ENCODE measurements at regions of chr12 and their contacts with region 1.

Region 1: GRCh38 chr12:127619869-127620734 is 646.9 kb upstream of the TMEM132C start:
- DNase-seq: no peak
- H3K4me3 ChIP-seq: no peak overlapping the region
- H3K27ac ChIP-seq: no peak overlapping the region
- H3K4me1 ChIP-seq: no peaks in the 10 kb centered on the region
- H3K27me3 ChIP-seq: no peaks in the 10 kb centered on the region
- CTCF ChIP-seq: no peak
- EP300 ChIP-seq: no peak
- POLR2A ChIP-seq: no peak

Region 2: GRCh38 chr12:127121494-127122084 is 498.5 kb before region 1 on chr12:
- in situ Hi-C with region 1: no loop called
- intact Hi-C with region 1: loop called (anchors 5 kb)
- DNase-seq: no peak
- H3K4me3 ChIP-seq: no peak overlapping the region
- H3K27ac ChIP-seq: no peak overlapping the region
- H3K4me1 ChIP-seq: no peaks in the 10 kb centered on the region
- H3K27me3 ChIP-seq: no peaks in the 10 kb centered on the region
- CTCF ChIP-seq: no peak
- EP300 ChIP-seq: no peak
- POLR2A ChIP-seq: no peak

Region 3: DNA sequence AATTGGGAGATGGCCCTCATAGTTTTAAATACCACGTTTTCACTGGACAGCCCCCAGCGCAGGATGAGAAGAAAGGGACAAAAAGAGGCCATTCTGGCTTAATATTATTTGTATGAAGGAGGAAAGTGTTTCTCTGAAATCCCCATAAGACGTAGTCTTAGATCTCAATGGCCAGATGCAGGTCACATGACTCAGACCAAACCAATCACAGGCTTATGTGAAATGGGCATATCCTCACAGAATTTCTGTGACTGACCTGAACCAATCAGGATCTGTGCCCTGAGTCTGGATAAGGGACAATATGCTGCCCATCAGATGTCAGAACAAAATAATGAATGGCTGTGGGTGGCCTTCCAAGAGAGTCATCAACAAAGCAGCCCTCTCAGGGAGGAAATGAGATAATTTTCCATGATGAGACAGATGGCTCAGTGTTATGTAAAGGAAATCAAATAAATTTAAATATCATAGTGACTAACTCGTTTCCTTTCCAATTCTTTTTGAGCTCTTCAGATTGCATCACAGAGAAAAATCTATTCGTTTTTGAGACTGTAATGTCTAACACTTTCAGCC is 362.7 kb before region 1 on chr12:
- in situ Hi-C with region 1: no loop called
- intact Hi-C with region 1: no loop called
- DNase-seq: no peak
- H3K4me3 ChIP-seq: no peak overlapping the region
- H3K27ac ChIP-seq: no peak overlapping the region
- H3K4me1 ChIP-seq: no peaks in the 10 kb centered on the region
- H3K27me3 ChIP-seq: no peaks in the 10 kb centered on the region
- CTCF ChIP-seq: no peak
- EP300 ChIP-seq: no peak
- POLR2A ChIP-seq: no peak

Region 4: DNA sequence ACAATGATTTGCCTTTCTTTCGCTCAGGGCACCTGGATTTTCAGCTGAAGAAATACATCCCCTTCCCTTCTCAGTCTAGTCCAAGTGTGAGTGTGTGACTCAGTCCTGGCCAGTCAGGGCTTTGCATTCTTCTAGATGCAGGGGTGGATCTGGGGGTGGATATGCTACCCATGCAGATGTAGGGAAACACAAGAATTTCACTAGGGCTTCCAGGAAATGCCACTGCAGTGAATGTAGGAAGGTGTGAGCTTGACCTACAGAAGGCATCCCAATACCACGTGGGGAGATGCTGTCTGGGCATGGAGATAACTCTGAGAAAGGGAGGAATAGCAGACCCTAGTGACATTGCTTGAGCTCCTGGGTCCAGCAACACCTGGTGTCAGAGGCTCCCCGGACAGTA is 1637.4 kb after region 1 on chr12:
- in situ Hi-C with region 1: no loop called
- intact Hi-C with region 1: no loop called
- DNase-seq: no peak
- H3K4me3 ChIP-seq: no peak overlapping the region
- H3K27ac ChIP-seq: no peak overlapping the region
- H3K4me1 ChIP-seq: no peaks in the 10 kb centered on the region
- H3K27me3 ChIP-seq: no peaks in the 10 kb centered on the region
- CTCF ChIP-seq: no peak
- EP300 ChIP-seq: no peak
- POLR2A ChIP-seq: no peak

Measured in transverse colon (tissue), 4 donors.